HEK293 (cell line): ENCODE measurements at regions of chr20 and their contacts with region 1.

Region 1: GRCh38 chr20:45138561-45139300 is 14.5 kb upstream of the WFDC12 start:
- H3K4me3 ChIP-seq: no peak overlapping the region
- H3K27ac ChIP-seq: no peak overlapping the region
- H3K4me1 ChIP-seq: no peaks in the 10 kb centered on the region
- CTCF ChIP-seq: peak; percentile 39; the same call in 1 of the 2 replicates

Region 2: DNA sequence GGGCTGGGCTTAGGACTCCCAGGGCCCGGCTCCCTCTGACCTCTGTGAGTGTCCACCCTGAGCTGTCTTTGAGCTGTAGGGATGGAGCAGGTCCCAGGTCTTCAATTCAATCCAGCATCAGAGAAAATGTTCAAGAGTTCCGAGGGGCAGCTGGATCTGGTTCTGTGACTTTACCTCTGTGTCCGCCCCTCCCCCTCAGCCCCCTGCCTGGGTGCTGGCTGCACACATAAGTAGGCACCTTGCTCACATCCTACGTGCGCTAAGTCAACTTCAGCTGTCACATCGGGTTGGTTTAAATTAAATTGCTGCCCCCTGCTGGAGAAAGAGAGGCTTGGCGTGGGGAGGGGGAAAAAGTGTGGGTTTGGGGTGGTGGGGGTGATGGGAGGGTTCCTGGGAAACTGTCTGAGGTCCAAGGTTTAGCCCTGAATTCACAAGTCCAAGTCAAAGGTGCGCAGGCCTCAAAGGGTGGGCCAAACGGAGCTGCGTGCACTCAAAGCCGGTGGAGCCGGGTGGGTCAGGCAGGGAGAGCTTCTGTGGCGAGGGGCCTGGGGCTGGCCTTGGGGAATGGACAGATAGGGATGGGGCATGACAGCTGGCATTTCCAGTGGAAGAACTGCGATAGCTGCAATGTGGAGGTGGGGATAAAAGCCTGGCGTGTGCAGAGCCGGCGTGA is 26.8 kb before region 1 on chr20:
- CTCF ChIA-PET with region 1: interaction called, 10 read pairs
- POLR2A ChIA-PET with region 1: no interaction called
- H3K4me3 ChIP-seq: no peak overlapping the region
- H3K27ac ChIP-seq: no peak overlapping the region
- H3K4me1 ChIP-seq: no peaks in the 10 kb centered on the region
- CTCF ChIP-seq: no peak

Region 3: GRCh38 chr20:45152405-45152804 is 13.7 kb after region 1 on chr20:
- CTCF ChIA-PET with region 1: interaction called, 15 read pairs
- POLR2A ChIA-PET with region 1: no interaction called
- H3K4me3 ChIP-seq: no peak overlapping the region
- H3K27ac ChIP-seq: no peak overlapping the region
- H3K4me1 ChIP-seq: no peaks in the 10 kb centered on the region
- CTCF ChIP-seq: no peak